Activated CD4-positive, alpha-beta memory T cell treated with anti-CD3 and anti-CD28 coated beads, Interleukin-2, amount 10 ng/mL, durations not matched to agents 7 days and 5 days (primary cell): ENCODE measurements at regions of chr15 and their contacts with region 1.

Region 1: GRCh38 chr15:44711356-44712107 is at the start of gene B2M:
- DNase-seq: peak; percentile 96
- H3K4me3 Mint-ChIP-seq: peak within 1 kb of the TSS; percentile 98
- H3K27ac Mint-ChIP-seq: peak within 1 kb of the TSS; percentile 99
- H3K4me1 Mint-ChIP-seq: peaks cover 39% of the 10 kb centered on the region
- H3K27me3 Mint-ChIP-seq: no peaks in the 10 kb centered on the region
- total RNA-seq, gene B2M: 9,723 to 9,975 TPM

Region 2: GRCh38 chr15:44536962-44537734 is 174.4 kb before region 1 on chr15 and contains the start of gene EIF3J:
- CTCF ChIA-PET with region 1: no interaction called
- POLR2A ChIA-PET with region 1: interaction called, 18 read pairs
- DNase-seq: peak; percentile 96
- H3K4me3 Mint-ChIP-seq: peak within 1 kb of the TSS; percentile 84
- H3K27ac Mint-ChIP-seq: peak within 1 kb of the TSS; percentile 95
- H3K4me1 Mint-ChIP-seq: peaks cover 56% of the 10 kb centered on the region
- H3K27me3 Mint-ChIP-seq: no peaks in the 10 kb centered on the region
- total RNA-seq, gene EIF3J: 70.6 to 87.8 TPM

Region 3: GRCh38 chr15:44593042-44593736 is 118.3 kb before region 1 on chr15:
- CTCF ChIA-PET with region 1: interaction called, 8 read pairs
- POLR2A ChIA-PET with region 1: interaction called, 49 read pairs
- DNase-seq: peak; percentile 20
- H3K4me3 Mint-ChIP-seq: no peak overlapping the region
- H3K27ac Mint-ChIP-seq: peak overlapping the region; percentile 37
- H3K4me1 Mint-ChIP-seq: peaks cover 34% of the 10 kb centered on the region
- H3K27me3 Mint-ChIP-seq: no peaks in the 10 kb centered on the region

Region 4: GRCh38 chr15:44663409-44664308 is 47.9 kb before region 1 on chr15 and contains the start of gene SPG11:
- CTCF ChIA-PET with region 1: interaction called, 329 read pairs
- POLR2A ChIA-PET with region 1: interaction called, 4,153 read pairs
- DNase-seq: peak; percentile 98
- H3K4me3 Mint-ChIP-seq: peak within 1 kb of the TSS; percentile 97
- H3K27ac Mint-ChIP-seq: peak within 1 kb of the TSS; percentile 92
- H3K4me1 Mint-ChIP-seq: peaks cover 63% of the 10 kb centered on the region
- H3K27me3 Mint-ChIP-seq: no peaks in the 10 kb centered on the region
- total RNA-seq, gene SPG11: 76.9 to 84.4 TPM

Region 5: GRCh38 chr15:44682211-44682610 is 29.3 kb before region 1 on chr15:
- CTCF ChIA-PET with region 1: interaction called, 24 read pairs
- POLR2A ChIA-PET with region 1: interaction called, 4,153 read pairs
- DNase-seq: no peak
- H3K4me3 Mint-ChIP-seq: peak overlapping the region; percentile 64
- H3K27ac Mint-ChIP-seq: peak overlapping the region; percentile 89
- H3K4me1 Mint-ChIP-seq: peaks cover 87% of the 10 kb centered on the region
- H3K27me3 Mint-ChIP-seq: no peaks in the 10 kb centered on the region

Region 6: GRCh38 chr15:44728576-44729407 is 17.3 kb after region 1 on chr15:
- CTCF ChIA-PET with region 1: interaction called, 399 read pairs
- POLR2A ChIA-PET with region 1: interaction called, 3,188 read pairs
- DNase-seq: peak; percentile 97
- H3K4me3 Mint-ChIP-seq: peak overlapping the region; percentile 99
- H3K27ac Mint-ChIP-seq: peak overlapping the region; percentile 100
- H3K4me1 Mint-ChIP-seq: peaks cover 69% of the 10 kb centered on the region
- H3K27me3 Mint-ChIP-seq: no peaks in the 10 kb centered on the region